ENCODE measurements at regions of chr7 and their contacts with region 1.

Region 1: GRCh38 chr7:45136106-45137060 is 21.2 kb upstream of the RAMP3 start:
- DNase-seq: peak; percentile 74
- ATAC-seq: peak; percentile 89
- H3K4me3 ChIP-seq: no peak overlapping the region
- H3K27ac ChIP-seq: no peak overlapping the region
- H3K4me1 ChIP-seq: no peaks in the 10 kb centered on the region
- H3K27me3 ChIP-seq: peaks cover 25% of the 10 kb centered on the region
- CTCF ChIP-seq: peak; percentile 96
- POLR2A ChIP-seq: 0 out of 2 replicates have a peak, but pooled peaks have one; percentile 18
- RAD21 ChIP-seq: peak; percentile 95

Region 2: GRCh38 chr7:44595934-44596635 is 540.3 kb before region 1 on chr7:
- CTCF ChIA-PET with region 1: no interaction called
- POLR2A ChIA-PET with region 1: no interaction called
- dilution Hi-C with region 1: no loop called
- in situ Hi-C with region 1: loop called (anchors 10 kb)
- intact Hi-C with region 1: no loop called
- DNase-seq: peak; percentile 16
- ATAC-seq: no peak
- H3K4me3 ChIP-seq: no peak overlapping the region
- H3K27ac ChIP-seq: no peak overlapping the region
- H3K4me1 ChIP-seq: 0 out of 2 replicates have a peak, but pooled peaks cover 2% of the 10 kb centered on the region
- H3K27me3 ChIP-seq: peaks cover 1% of the 10 kb centered on the region
- CTCF ChIP-seq: no peak
- POLR2A ChIP-seq: no peak
- RAD21 ChIP-seq: no peak

Region 3: GRCh38 chr7:44858161-44858560 is 278.2 kb before region 1 on chr7:
- CTCF ChIA-PET with region 1: interaction called, 7 read pairs
- POLR2A ChIA-PET with region 1: no interaction called
- dilution Hi-C with region 1: no loop called
- in situ Hi-C with region 1: loop called (anchors 10 kb)
- intact Hi-C with region 1: loop called (anchors 2 kb)
- DNase-seq: no peak
- ATAC-seq: no peak
- H3K4me3 ChIP-seq: no peak overlapping the region
- H3K27ac ChIP-seq: no peak overlapping the region
- H3K4me1 ChIP-seq: peaks cover 2% of the 10 kb centered on the region; the same call in 1 of the 2 replicates
- H3K27me3 ChIP-seq: no peaks in the 10 kb centered on the region
- CTCF ChIP-seq: no peak; the same call in 1 of the 2 replicates
- POLR2A ChIP-seq: no peak
- RAD21 ChIP-seq: no peak

Region 4: GRCh38 chr7:44967571-44968446 is 168.6 kb before region 1 on chr7:
- CTCF ChIA-PET with region 1: interaction called, 31 read pairs
- POLR2A ChIA-PET with region 1: no interaction called
- dilution Hi-C with region 1: no loop called
- in situ Hi-C with region 1: loop called (anchors 10 kb)
- intact Hi-C with region 1: loop called (anchors 1 kb)
- DNase-seq: no peak
- ATAC-seq: no peak
- H3K4me3 ChIP-seq: no peak overlapping the region
- H3K27ac ChIP-seq: no peak overlapping the region
- H3K4me1 ChIP-seq: no peaks in the 10 kb centered on the region; the same call in 1 of the 2 replicates
- H3K27me3 ChIP-seq: peaks cover 11% of the 10 kb centered on the region; the same call in 1 of the 2 replicates
- CTCF ChIP-seq: peak; percentile 34
- POLR2A ChIP-seq: no peak
- RAD21 ChIP-seq: peak; percentile 38

Region 5: GRCh38 chr7:45812946-45813345 is 676.6 kb after region 1 on chr7:
- CTCF ChIA-PET with region 1: no interaction called
- POLR2A ChIA-PET with region 1: no interaction called
- dilution Hi-C with region 1: no loop called
- in situ Hi-C with region 1: no loop called
- intact Hi-C with region 1: no loop called
- DNase-seq: no peak
- ATAC-seq: no peak
- H3K4me3 ChIP-seq: no peak overlapping the region
- H3K27ac ChIP-seq: no peak overlapping the region
- H3K4me1 ChIP-seq: no peaks in the 10 kb centered on the region
- H3K27me3 ChIP-seq: no peaks in the 10 kb centered on the region
- CTCF ChIP-seq: no peak
- POLR2A ChIP-seq: no peak
- RAD21 ChIP-seq: no peak

Measured in IMR-90 (cell line).